CD4-positive, alpha-beta T cell (primary cell): ENCODE measurements at regions of chrX and their contacts with region 1.

Region 1: DNA sequence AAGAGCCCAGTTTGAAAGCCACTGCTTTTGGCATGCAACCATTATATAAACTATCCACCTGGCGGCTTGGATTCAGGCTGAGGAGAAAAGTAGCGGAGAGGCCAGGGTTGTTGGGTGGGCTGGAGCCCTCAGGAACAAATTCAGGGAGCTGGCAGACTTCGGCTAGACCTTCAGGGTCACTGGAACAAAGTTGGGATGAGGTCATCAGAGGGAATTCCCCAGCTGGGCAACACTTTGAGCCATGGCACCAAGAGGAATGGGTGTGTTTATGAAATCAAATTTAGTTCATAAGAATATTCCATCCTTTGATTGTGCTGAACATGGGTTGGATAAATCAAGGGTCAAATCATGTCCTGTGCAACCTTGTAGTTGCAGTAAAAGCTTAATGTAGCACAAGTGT is 22.0 kb downstream of the MTMR1 start:
- DNase-seq: peak in 1 of 14 experiments; percentile 5
- ATAC-seq: no peak
- H3K4me3 ChIP-seq: no peak overlapping the region
- H3K4me3 Mint-ChIP-seq: no peak overlapping the region
- H3K27ac ChIP-seq: no peak overlapping the region
- H3K27ac Mint-ChIP-seq: peak overlapping the region; percentile 43
- H3K4me1 ChIP-seq: peaks cover 4% of the 10 kb centered on the region
- H3K4me1 Mint-ChIP-seq: peaks cover 53% of the 10 kb centered on the region
- H3K27me3 ChIP-seq: no peaks in the 10 kb centered on the region
- H3K27me3 Mint-ChIP-seq: no peaks in the 10 kb centered on the region
- CTCF ChIP-seq: no peak

Region 2: DNA sequence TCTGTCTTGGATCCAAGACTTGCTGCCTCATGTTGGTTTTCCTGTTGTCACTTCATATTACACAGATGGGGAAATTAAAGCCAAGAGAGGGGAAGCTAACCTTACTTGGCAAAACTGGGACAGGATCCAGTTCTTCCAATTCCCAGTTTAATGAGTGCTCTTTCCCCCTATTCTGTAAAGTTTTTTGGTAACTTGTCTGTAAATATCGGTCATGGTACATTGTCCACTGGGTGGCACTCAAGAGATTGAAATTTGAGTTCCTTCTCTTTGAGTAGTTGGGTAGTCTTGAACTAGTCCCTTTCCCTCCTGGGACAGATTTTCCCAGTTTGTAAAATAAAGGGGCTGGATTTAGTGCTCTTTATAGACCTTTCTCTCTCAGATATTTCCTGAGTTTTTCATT is 764.5 kb before region 1 on chrX:
- CTCF ChIA-PET with region 1: no interaction called
- POLR2A ChIA-PET with region 1: no interaction called
- intact Hi-C with region 1: loop called in 1 of 2 experiments (anchors 5 kb)
- DNase-seq: peak in 4 of 14 experiments; percentile 5 to 39 (median 26)
- ATAC-seq: no peak
- H3K4me3 ChIP-seq: no peak overlapping the region
- H3K4me3 Mint-ChIP-seq: no peak overlapping the region
- H3K27ac ChIP-seq: no peak overlapping the region
- H3K27ac Mint-ChIP-seq: no peak overlapping the region
- H3K4me1 ChIP-seq: no peaks in the 10 kb centered on the region
- H3K4me1 Mint-ChIP-seq: no peaks in the 10 kb centered on the region
- H3K27me3 ChIP-seq: no peaks in the 10 kb centered on the region
- H3K27me3 Mint-ChIP-seq: no peaks in the 10 kb centered on the region
- CTCF ChIP-seq: no peak

Region 3: GRCh38 chrX:150587585-150588503 is 127.3 kb before region 1 on chrX:
- CTCF ChIA-PET with region 1: no interaction called
- POLR2A ChIA-PET with region 1: no interaction called
- intact Hi-C with region 1: loop called in 1 of 2 experiments (anchors 5 kb)
- DNase-seq: peak; percentile 18 to 69 (median 38)
- ATAC-seq: peak; percentile 51
- H3K4me3 ChIP-seq: no peak overlapping the region
- H3K4me3 Mint-ChIP-seq: no peak overlapping the region
- H3K27ac ChIP-seq: no peak overlapping the region
- H3K27ac Mint-ChIP-seq: no peak overlapping the region
- H3K4me1 ChIP-seq: no peaks in the 10 kb centered on the region
- H3K4me1 Mint-ChIP-seq: peaks cover 39% of the 10 kb centered on the region
- H3K27me3 ChIP-seq: no peaks in the 10 kb centered on the region
- H3K27me3 Mint-ChIP-seq: no peaks in the 10 kb centered on the region
- CTCF ChIP-seq: peak; percentile 77

Region 4: DNA sequence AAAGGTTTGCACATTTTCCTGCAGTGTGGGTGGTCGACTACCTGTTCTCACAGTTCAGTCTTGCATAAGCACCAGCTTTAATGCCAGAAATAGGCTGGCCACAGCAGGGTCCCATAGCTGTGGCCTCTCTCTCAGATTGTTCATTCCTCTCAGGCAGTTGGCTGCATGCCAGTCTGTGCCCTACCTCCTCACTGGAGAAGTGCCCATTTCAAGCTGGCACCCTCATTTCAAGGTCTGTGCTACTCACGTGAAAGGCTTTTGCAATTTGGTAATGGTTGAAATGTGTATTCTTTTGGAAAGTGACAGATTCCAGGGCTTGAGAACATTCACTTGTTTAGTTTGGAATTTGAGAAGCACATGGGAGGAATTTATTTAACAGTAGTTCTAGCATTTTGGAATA is 50.9 kb before region 1 on chrX:
- CTCF ChIA-PET with region 1: no interaction called
- POLR2A ChIA-PET with region 1: no interaction called
- intact Hi-C with region 1: loop called (anchors 10 kb)
- DNase-seq: no peak
- ATAC-seq: no peak
- H3K4me3 ChIP-seq: no peak overlapping the region
- H3K4me3 Mint-ChIP-seq: no peak overlapping the region
- H3K27ac ChIP-seq: no peak overlapping the region
- H3K27ac Mint-ChIP-seq: no peak overlapping the region
- H3K4me1 ChIP-seq: no peaks in the 10 kb centered on the region
- H3K4me1 Mint-ChIP-seq: no peaks in the 10 kb centered on the region
- H3K27me3 ChIP-seq: no peaks in the 10 kb centered on the region
- H3K27me3 Mint-ChIP-seq: no peaks in the 10 kb centered on the region
- CTCF ChIP-seq: no peak

Region 5: GRCh38 chrX:150683536-150684146 is 31.5 kb before region 1 on chrX:
- CTCF ChIA-PET with region 1: interaction called, 17 read pairs
- POLR2A ChIA-PET with region 1: interaction called, 3 read pairs
- intact Hi-C with region 1: loop called (anchors 1 kb)
- DNase-seq: peak in 4 of 14 experiments; percentile 44 to 78 (median 72)
- ATAC-seq: peak; percentile 54
- H3K4me3 ChIP-seq: no peak overlapping the region
- H3K4me3 Mint-ChIP-seq: no peak overlapping the region
- H3K27ac ChIP-seq: no peak overlapping the region
- H3K27ac Mint-ChIP-seq: no peak overlapping the region
- H3K4me1 ChIP-seq: peaks cover 12% of the 10 kb centered on the region
- H3K4me1 Mint-ChIP-seq: peaks cover 12% of the 10 kb centered on the region
- H3K27me3 ChIP-seq: no peaks in the 10 kb centered on the region
- H3K27me3 Mint-ChIP-seq: no peaks in the 10 kb centered on the region
- CTCF ChIP-seq: peak; percentile 61

Region 6: DNA sequence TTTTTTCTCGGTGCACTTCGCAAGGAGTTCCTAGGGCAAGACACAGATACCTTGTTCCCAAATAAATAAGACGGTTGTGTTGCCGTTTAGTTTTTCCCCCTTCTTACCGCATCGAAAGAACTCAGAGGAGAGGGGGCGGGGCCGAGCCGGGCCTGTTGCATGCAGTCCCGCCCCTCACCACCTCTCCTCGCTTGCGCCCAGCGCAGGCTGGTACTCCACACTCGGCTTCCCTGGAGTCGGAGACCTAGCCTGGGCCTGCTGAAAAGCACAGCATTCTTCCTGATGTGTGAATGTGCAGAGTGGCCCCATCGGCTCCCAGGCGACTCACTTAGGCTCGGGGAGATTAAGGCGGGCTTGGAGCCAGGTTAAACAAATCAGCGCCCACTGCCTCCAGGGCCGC is 655.7 kb after region 1 on chrX:
- CTCF ChIA-PET with region 1: no interaction called
- POLR2A ChIA-PET with region 1: no interaction called
- intact Hi-C with region 1: no loop called
- DNase-seq: peak in 2 of 14 experiments; percentile 6 to 20
- ATAC-seq: peak; percentile 54
- H3K4me3 ChIP-seq: no peak overlapping the region
- H3K4me3 Mint-ChIP-seq: no peak overlapping the region
- H3K27ac ChIP-seq: no peak overlapping the region
- H3K27ac Mint-ChIP-seq: no peak overlapping the region
- H3K4me1 ChIP-seq: no peaks in the 10 kb centered on the region
- H3K4me1 Mint-ChIP-seq: no peaks in the 10 kb centered on the region
- H3K27me3 ChIP-seq: peaks cover 3 to 12% of the 10 kb centered on the region in 2 experiments
- H3K27me3 Mint-ChIP-seq: peaks cover 28% of the 10 kb centered on the region
- CTCF ChIP-seq: no peak